ENCODE measurements at regions of chr1 and their contacts with region 1.

Region 1: GRCh38 chr1:54764133-54764921 is at the start of gene PARS2:
- DNase-seq: peak; percentile 97
- ATAC-seq: peak; percentile 97
- H3K4me3 ChIP-seq: peak within 1 kb of the TSS; percentile 99
- H3K27ac ChIP-seq: peak within 1 kb of the TSS; percentile 71
- H3K4me1 ChIP-seq: peaks cover 9% of the 10 kb centered on the region
- H3K27me3 ChIP-seq: no peaks in the 10 kb centered on the region
- CTCF ChIP-seq: no peak
- EP300 ChIP-seq: no peak
- POLR2A ChIP-seq: peak; percentile 93
- RAD21 ChIP-seq: no peak
- polyA plus RNA-seq, gene PARS2: 3.7 to 4.3 TPM

Region 2: DNA sequence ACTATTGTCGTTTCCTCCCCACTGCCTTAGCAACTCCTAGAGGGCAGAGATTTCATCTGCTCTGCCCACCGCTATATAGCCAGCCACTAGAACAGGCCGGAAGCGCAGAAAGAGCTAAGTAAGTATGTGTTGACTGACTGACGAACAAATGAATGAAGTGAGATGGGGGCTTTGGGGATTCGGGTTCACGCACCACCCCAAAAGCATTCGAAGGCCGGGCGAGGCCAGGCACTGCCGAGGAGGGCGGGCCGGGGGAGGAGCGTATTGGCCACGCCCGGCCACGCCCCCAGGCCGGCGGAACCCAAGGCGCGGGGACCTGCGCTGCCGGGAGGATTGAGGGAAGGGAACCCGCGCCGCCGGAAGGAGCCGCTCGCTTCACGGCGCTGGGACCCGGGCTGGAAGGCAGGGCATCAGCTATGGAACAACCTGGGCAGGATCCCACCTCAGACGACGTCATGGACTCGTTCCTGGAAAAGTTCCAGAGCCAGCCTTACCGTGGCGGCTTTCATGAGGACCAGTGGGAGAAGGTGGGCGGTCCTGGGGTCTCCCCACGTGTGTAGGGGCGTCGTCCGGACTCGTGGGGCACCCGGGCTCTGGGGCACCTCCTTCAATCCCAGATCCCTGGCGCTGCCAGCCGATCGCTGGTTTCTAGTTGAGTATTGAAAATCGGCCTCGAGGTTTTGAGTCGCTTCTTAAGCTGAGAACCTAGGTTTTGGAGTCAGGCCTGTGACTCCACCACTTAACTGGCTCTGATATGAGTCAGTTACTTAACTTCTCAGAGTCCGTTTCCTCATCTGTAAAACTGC is 48.6 kb before region 1 on chr1 and contains the start of gene TTC4:
- CTCF ChIA-PET with region 1: no interaction called
- POLR2A ChIA-PET with region 1: no interaction called
- RAD21 ChIA-PET with region 1: no interaction called
- SMC1A ChIA-PET with region 1: interaction called, 7 read pairs
- in situ Hi-C with region 1: no loop called
- intact Hi-C with region 1: loop called (anchors 2 kb)
- DNase-seq: peak; percentile 40
- ATAC-seq: peak; percentile 98
- H3K4me3 ChIP-seq: peak within 1 kb of the TSS; percentile 77
- H3K27ac ChIP-seq: peak within 1 kb of the TSS; percentile 78
- H3K4me1 ChIP-seq: peaks cover 3% of the 10 kb centered on the region; the same call in 1 of the 2 replicates
- H3K27me3 ChIP-seq: no peaks in the 10 kb centered on the region; a peak in 1 of 4 replicates
- CTCF ChIP-seq: no peak
- EP300 ChIP-seq: peak in 1 of 2 experiments; percentile 19; a peak in 1 of 4 replicates
- POLR2A ChIP-seq: peak; percentile 97
- RAD21 ChIP-seq: no peak
- polyA plus RNA-seq, gene TTC4: 28.8 to 50.1 TPM